Activated naive CD4-positive, alpha-beta T cell treated with anti-CD3 and anti-CD28 coated beads for 36 hours (primary cell): ENCODE measurements at regions of chr14 and their contacts with region 1.

Region 1: GRCh38 chr14:88189417-88190191 is 133.5 kb downstream of the KCNK10 start:
- DNase-seq: peak; percentile 82
- H3K4me3 Mint-ChIP-seq: no peak overlapping the region
- H3K27ac Mint-ChIP-seq: no peak overlapping the region
- H3K4me1 Mint-ChIP-seq: peaks cover 5% of the 10 kb centered on the region
- H3K27me3 Mint-ChIP-seq: peaks cover 16% of the 10 kb centered on the region

Region 2: DNA sequence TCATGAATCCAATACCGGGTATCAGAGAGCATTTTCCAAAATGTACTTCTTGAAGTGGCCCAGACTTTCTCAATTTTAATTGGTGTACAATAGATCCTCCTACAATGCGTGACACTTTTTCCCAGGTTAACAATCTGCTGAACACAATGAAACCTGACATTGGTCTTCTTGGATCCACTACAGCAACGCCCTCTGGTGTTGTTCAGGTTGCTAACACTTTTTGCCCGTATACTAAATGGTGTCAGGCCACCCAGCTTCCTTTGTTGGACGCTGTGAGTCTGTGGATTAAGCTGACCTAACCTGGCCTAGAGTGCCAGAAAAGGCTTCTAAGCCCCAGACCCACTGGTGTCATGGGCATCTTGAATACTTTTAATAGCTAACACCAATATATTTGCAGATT is 44.3 kb after region 1 on chr14:
- CTCF ChIA-PET with region 1: interaction called, 17 read pairs
- intact Hi-C with region 1: loop called (anchors 1 kb)
- DNase-seq: peak; percentile 18
- H3K4me3 Mint-ChIP-seq: no peak overlapping the region
- H3K27ac Mint-ChIP-seq: no peak overlapping the region
- H3K4me1 Mint-ChIP-seq: no peaks in the 10 kb centered on the region
- H3K27me3 Mint-ChIP-seq: peaks cover 5% of the 10 kb centered on the region

Region 3: DNA sequence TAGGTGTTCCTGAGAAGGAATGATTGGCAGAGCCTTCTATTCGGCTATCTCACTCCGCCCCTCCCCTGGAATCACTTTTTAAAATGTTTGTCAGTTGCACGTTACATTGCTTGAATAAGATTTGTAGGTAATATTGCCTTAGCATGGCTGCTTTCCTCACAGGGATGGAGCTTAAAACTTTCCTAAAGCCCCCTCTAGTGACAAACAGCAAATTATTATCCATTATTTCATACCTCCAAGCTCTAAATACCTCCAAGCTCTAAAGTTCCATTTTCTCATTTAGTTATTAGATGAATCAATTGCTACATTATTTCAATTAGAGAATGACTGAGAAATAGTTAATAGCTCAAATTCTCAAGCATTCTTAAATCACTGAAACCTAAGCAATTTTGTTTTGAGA is 190.8 kb after region 1 on chr14:
- CTCF ChIA-PET with region 1: interaction called, 8 read pairs
- intact Hi-C with region 1: loop called (anchors 2 kb)
- DNase-seq: no peak
- H3K4me3 Mint-ChIP-seq: no peak overlapping the region
- H3K27ac Mint-ChIP-seq: no peak overlapping the region
- H3K4me1 Mint-ChIP-seq: peaks cover 4% of the 10 kb centered on the region
- H3K27me3 Mint-ChIP-seq: no peaks in the 10 kb centered on the region

Region 4: GRCh38 chr14:88437658-88438057 is 248.1 kb after region 1 on chr14:
- CTCF ChIA-PET with region 1: interaction called, 3 read pairs
- intact Hi-C with region 1: loop called (anchors 5 kb)
- DNase-seq: no peak
- H3K4me3 Mint-ChIP-seq: no peak overlapping the region
- H3K27ac Mint-ChIP-seq: no peak overlapping the region
- H3K4me1 Mint-ChIP-seq: no peaks in the 10 kb centered on the region
- H3K27me3 Mint-ChIP-seq: no peaks in the 10 kb centered on the region

Region 5: GRCh38 chr14:88868558-88869159 is 679.1 kb after region 1 on chr14:
- CTCF ChIA-PET with region 1: no interaction called
- intact Hi-C with region 1: loop called (anchors 5 kb)
- DNase-seq: no peak
- H3K4me3 Mint-ChIP-seq: no peak overlapping the region
- H3K27ac Mint-ChIP-seq: no peak overlapping the region
- H3K4me1 Mint-ChIP-seq: no peaks in the 10 kb centered on the region
- H3K27me3 Mint-ChIP-seq: no peaks in the 10 kb centered on the region